ENCODE measurements at regions of chr1 and their contacts with region 1.

Region 1: GRCh38 chr1:73273886-73274285 is 924.1 kb downstream of the LRRIQ3 start:
- DNase-seq: no peak
- ATAC-seq: no peak
- H3K4me3 ChIP-seq: no peak overlapping the region
- H3K27ac ChIP-seq: no peak overlapping the region
- H3K4me1 ChIP-seq: no peaks in the 10 kb centered on the region
- H3K27me3 ChIP-seq: no peaks in the 10 kb centered on the region
- CTCF ChIP-seq: no peak
- POLR2A ChIP-seq: no peak
- RAD21 ChIP-seq: no peak

Region 2: DNA sequence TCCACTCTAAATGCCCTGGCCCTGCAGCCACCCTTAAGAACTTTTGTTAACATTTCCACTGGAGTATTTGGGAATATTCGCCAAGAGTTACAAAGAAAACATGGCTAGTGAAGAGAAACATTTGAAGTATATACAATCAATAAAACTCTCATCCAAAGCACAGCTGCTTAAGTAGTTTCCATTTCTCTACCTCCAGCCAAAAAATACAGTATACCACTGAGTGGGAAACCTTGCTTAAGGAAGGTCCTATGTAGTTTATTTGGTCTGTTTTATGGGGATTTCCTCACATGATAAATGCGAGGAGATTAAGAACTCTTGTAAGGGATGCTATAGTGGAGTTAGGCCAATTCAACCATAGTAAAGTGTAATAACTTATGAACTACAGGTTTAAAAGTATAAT is 1374.0 kb before region 1 on chr1:
- CTCF ChIA-PET with region 1: no interaction called
- POLR2A ChIA-PET with region 1: no interaction called
- RAD21 ChIA-PET with region 1: no interaction called
- intact Hi-C with region 1: loop called (anchors 5 kb)
- DNase-seq: no peak
- ATAC-seq: no peak
- H3K4me3 ChIP-seq: no peak overlapping the region
- H3K27ac ChIP-seq: no peak overlapping the region
- H3K4me1 ChIP-seq: no peaks in the 10 kb centered on the region
- H3K27me3 ChIP-seq: no peaks in the 10 kb centered on the region
- CTCF ChIP-seq: no peak
- POLR2A ChIP-seq: no peak
- RAD21 ChIP-seq: no peak